Lower leg skin (tissue), 4 donors: ENCODE measurements at regions of chrX and their contacts with region 1.

Region 1: DNA sequence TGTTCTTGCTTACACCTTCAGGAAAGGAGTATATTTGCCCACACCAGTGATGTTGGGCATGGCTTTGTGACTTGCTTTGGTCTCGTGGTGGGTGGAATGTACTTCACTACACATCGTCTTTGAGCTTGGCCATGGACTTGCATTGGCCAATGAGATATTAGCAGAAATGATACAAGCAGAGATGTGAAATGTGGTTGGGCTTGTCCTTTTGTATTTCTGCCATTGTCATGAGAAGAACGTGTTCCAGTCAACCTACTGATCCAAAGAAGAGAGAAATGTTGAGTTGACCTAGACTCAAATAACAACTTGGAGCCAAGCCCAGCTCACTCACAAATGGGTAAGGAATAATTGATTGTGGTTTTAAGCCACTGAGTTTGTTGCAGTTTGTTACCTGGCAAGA is 138.4 kb upstream of the ARX start:
- DNase-seq: no peak
- H3K4me3 ChIP-seq: no peak overlapping the region
- CTCF ChIP-seq: no peak
- POLR2A ChIP-seq: no peak

Region 2: GRCh38 chrX:23844502-23845138 is 1309.5 kb before region 1 on chrX:
- intact Hi-C with region 1: loop called (anchors 5 kb)
- DNase-seq: peak in 1 of 2 donors; percentile 16
- H3K4me3 ChIP-seq: no peak overlapping the region
- CTCF ChIP-seq: no peak
- POLR2A ChIP-seq: no peak

Region 3: DNA sequence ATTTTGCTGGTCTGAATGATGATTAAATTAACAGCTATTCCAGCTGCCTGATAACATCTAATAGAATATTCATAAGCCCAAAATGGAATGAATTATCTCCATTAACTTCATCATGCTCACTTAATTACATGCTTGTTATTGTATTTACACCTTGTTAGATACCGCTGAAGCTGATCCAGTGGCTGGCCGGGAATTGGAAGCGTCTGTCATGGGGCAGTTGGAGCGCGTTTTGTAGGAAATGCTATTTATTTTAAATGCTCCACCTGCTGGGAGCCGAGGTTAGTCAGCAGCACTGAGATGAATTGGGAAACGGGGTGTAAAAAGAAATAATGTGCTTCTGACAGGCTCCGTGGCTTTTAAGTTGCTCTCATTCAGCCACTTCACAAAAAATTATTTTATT is 163.6 kb before region 1 on chrX:
- intact Hi-C with region 1: no loop called
- DNase-seq: no peak
- H3K4me3 ChIP-seq: no peak overlapping the region
- CTCF ChIP-seq: no peak
- POLR2A ChIP-seq: no peak

Region 4: DNA sequence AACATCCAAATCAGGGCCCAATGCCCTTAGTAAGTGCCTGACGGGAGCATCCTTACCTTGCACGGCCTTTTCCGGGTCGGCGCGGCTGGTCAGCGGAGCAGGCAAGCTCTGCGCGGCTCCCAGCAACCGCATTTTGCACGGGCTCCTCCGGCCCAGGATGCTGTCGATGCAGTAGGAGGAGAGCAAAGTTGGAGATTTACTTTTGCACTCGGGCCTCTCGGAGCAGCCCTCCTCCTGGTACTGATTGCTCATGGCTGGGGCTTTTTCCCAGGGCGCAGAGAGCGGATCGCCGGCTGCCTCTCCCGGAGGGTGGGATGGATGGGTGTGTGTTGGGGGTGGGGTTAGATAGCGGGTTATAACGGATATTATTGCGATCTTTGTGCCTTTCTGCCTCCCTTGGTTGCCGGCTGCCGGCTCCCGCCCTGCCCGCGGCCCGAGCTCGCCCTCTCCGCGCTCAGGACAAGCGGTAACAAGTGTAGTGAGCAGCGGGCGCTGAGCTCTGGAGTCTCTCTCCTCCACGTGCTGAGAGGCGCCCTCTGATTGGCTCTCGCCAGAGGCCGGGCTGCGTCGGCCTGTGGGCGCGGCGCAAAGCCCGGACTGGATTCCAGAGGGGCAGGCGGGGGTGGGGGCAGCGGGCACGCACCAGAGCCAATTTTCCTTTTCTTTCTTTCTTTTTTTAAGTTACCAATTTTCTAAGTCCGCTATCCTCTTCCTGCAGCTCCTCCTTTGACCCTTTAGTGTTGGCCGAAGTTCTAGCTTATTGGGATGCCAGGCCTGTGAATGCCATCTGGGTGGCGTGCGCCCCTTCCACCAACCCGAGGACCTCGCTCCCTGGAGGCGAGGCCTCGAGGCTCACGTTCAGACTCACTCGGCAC is 138.4 kb before region 1 on chrX and contains the start of gene ARX:
- intact Hi-C with region 1: no loop called
- DNase-seq: no peak
- H3K4me3 ChIP-seq: no peak within 1 kb of the TSS
- CTCF ChIP-seq: no peak
- POLR2A ChIP-seq: no peak
- total RNA-seq, gene ARX: not detected